A549 (cell line): ENCODE measurements at regions of chr2 and their contacts with region 1.

Region 1: GRCh38 chr2:85457877-85458316 is 39.4 kb downstream of the SH2D6 start:
- DNase-seq: peak in 1 of 2 experiments; percentile 75
- ATAC-seq: peak; percentile 60 to 64; a peak in 4 of 6 replicates
- H3K4me3 ChIP-seq: no peak overlapping the region
- H3K27ac ChIP-seq: peak overlapping the region; percentile 48 to 77
- H3K4me1 ChIP-seq: peaks cover 31% of the 10 kb centered on the region
- CTCF ChIP-seq: no peak
- EP300 ChIP-seq: peak in 1 of 2 experiments; percentile 38; a peak in 1 of 5 replicates
- POLR2A ChIP-seq: no peak
- RAD21 ChIP-seq: peak; percentile 1 to 12; a peak in 1 of 5 replicates

Region 2: DNA sequence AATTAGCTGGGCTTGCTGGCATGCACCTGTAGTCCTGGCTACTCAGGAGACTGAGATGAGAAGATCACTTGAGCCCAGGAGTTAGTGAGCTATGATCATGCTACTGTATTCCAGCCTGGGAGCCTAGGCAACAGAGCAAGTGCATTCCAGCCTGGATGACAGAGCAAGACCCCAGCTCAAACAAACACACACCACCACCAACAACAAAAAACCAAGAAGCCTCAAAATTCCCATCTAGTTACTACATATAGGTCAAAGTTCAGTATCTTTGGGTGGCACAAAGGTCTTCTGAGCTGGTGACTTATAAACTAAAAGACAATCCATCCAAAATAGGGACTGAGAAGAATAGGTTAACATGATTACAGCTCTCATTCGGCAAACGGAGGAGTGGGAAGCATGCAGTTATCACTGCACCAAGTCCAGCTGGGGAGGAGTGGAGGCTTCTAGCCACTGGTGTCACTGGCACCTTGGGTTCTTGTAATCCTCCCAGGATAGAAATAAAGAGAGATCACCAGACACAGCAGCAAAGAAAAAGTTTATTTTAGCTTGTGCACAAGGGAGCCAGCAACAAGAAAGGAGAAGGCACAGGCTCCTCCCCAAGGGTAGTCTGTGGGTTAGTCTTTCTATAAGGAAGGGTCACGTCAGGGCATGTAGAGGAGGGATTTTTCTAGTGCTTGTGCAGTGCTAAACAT is 18.0 kb after region 1 on chr2:
- CTCF ChIA-PET with region 1: interaction called, 15 read pairs
- POLR2A ChIA-PET with region 1: no interaction called
- DNase-seq: no peak
- ATAC-seq: 0 out of 6 replicates have a peak, but pooled peaks of 1 of the 2 experiments have one; percentile 14
- H3K4me3 ChIP-seq: no peak overlapping the region
- H3K27ac ChIP-seq: peak overlapping the region; percentile 23 to 53; a peak in 4 of 6 replicates
- H3K4me1 ChIP-seq: peaks cover 28% of the 10 kb centered on the region
- CTCF ChIP-seq: no peak
- EP300 ChIP-seq: no peak
- POLR2A ChIP-seq: no peak
- RAD21 ChIP-seq: no peak

Region 3: GRCh38 chr2:85577386-85578242 is 119.7 kb after region 1 on chr2 and contains the start of gene VAMP8:
- CTCF ChIA-PET with region 1: no interaction called
- POLR2A ChIA-PET with region 1: no interaction called
- DNase-seq: peak in 1 of 2 experiments; percentile 40
- ATAC-seq: peak; percentile 60 to 79
- H3K4me3 ChIP-seq: peak within 1 kb of the TSS; percentile 29
- H3K27ac ChIP-seq: peak within 1 kb of the TSS; percentile 52 to 65
- H3K4me1 ChIP-seq: peaks cover 5% of the 10 kb centered on the region; the same call in 1 of the 3 replicates
- CTCF ChIP-seq: no peak
- EP300 ChIP-seq: no peak
- POLR2A ChIP-seq: no peak
- RAD21 ChIP-seq: no peak
- polyA plus RNA-seq, gene VAMP8: 38.3 and 41.1 TPM in 2 replicates